Right cardiac atrium (tissue), 5 donors: ENCODE measurements at regions of chr9 and their contacts with region 1.

Region 1: GRCh38 chr9:21326526-21327139 is 8.6 kb downstream of the KLHL9 start:
- DNase-seq: no peak
- ATAC-seq: peak; percentile 71 to 72
- H3K4me3 ChIP-seq: no peak overlapping the region
- H3K27ac ChIP-seq: no peak overlapping the region
- H3K4me1 ChIP-seq: peaks cover 2% of the 10 kb centered on the region
- H3K27me3 ChIP-seq: no peaks in the 10 kb centered on the region

Region 2: GRCh38 chr9:21395778-21396717 is 69.4 kb after region 1 on chr9:
- intact Hi-C with region 1: loop called in 2 of 4 experiments (anchors 5 to 10 kb)
- DNase-seq: peak; percentile 53 to 83 (median 69)
- ATAC-seq: peak; percentile 74 to 83
- H3K4me3 ChIP-seq: peak overlapping the region; percentile 63
- H3K27ac ChIP-seq: no peak overlapping the region
- H3K4me1 ChIP-seq: no peaks in the 10 kb centered on the region
- H3K27me3 ChIP-seq: peaks cover 3% of the 10 kb centered on the region